ENCODE measurements at regions of chr1 and their contacts with region 1.

Region 1: DNA sequence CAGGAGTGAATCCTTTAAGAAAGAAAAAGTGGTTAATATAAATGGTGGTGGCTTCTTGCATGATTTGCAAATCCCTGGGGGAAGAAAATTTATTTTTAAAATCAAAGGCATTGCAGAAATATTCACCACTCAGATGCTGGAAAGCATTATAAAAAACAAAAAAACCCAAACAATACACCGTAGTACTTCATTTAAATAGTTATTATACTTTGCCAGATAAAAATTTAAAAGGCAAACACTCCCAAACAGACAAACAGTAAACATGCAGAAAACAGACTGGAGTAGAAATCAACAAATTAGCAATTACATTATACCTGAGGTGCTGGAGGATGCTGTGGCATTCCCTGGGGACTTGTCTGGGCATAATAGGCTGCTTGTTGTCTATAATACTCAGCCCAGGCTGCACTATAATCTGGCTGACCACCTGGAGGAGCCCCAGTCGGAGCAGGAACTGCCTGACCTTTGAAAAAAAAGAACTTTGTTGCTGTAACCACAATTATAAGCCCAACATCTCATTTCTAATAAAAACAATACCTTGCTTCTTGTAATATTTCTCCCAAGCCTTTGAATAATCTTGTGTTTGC is 29.9 kb downstream of the FUBP1 start:
- DNase-seq: peak; percentile 27
- H3K4me3 ChIP-seq: no peak overlapping the region
- H3K27ac ChIP-seq: peak overlapping the region; percentile 4
- H3K4me1 ChIP-seq: peaks cover 43% of the 10 kb centered on the region
- CTCF ChIP-seq: peak; percentile 32; the same call in 1 of the 2 replicates

Region 2: GRCh38 chr1:77970192-77970591 is 21.3 kb after region 1 on chr1:
- CTCF ChIA-PET with region 1: no interaction called
- POLR2A ChIA-PET with region 1: interaction called, 7 read pairs
- intact Hi-C with region 1: loop called (anchors 2 kb)
- DNase-seq: no peak
- H3K4me3 ChIP-seq: no peak overlapping the region
- H3K27ac ChIP-seq: no peak overlapping the region
- H3K4me1 ChIP-seq: peaks cover 9% of the 10 kb centered on the region
- CTCF ChIP-seq: no peak

Region 3: DNA sequence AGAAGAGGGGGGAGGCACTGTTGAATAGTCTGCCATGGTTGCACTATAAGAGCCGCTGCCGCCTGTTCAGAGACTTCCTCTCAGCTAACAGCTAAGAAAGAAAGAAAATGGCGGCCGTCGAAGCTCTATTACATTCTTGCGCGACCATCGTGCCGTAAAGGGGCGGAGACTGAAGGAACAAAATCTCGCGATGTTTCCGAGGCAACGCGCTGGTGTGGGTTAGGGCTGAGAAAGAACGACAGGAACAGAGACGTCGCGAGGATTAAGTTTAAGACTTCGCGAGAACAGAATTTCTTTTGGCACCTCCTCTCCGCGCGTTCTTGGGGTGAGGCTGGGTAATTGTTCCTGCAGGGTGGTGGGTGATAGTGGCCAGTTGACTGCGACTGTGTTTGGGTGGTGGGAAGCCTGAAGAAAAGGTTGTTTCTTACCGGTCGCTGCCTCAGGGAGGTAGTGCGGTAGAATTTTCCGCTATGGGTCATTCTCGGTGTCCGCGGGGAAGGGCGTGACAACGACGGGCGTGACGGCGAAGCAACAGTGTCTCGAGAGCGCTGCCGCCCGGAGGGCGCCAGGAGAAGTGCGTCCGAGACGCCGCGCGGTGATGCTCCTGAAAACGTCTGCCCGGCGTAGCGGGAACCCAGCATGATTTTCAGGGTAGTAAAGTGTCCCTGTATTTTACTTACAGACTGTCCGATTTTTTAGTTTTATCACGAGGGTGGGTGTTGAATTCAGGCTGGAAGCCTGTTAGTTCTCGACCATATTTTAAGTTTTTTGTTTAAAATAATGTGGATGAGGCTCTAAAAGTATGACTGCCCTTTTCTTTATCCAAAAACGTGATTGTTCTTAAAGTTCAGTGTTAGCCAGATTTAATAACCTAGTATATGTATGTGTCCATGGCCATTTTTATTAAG is 30.3 kb after region 1 on chr1 and contains the start of gene FUBP1:
- CTCF ChIA-PET with region 1: no interaction called
- POLR2A ChIA-PET with region 1: interaction called, 10 read pairs
- intact Hi-C with region 1: loop called (anchors 2 kb)
- DNase-seq: peak; percentile 99
- H3K4me3 ChIP-seq: peak within 1 kb of the TSS; percentile 87
- H3K27ac ChIP-seq: peak within 1 kb of the TSS; percentile 90
- H3K4me1 ChIP-seq: peaks cover 44% of the 10 kb centered on the region
- CTCF ChIP-seq: peak; percentile 79
- total RNA-seq, gene FUBP1: 234 and 256 TPM in 2 replicates

Measured in OCI-LY7 (cell line).